Panc1 (cell line): ENCODE measurements at regions of chr16 and their contacts with region 1.

Region 1: DNA sequence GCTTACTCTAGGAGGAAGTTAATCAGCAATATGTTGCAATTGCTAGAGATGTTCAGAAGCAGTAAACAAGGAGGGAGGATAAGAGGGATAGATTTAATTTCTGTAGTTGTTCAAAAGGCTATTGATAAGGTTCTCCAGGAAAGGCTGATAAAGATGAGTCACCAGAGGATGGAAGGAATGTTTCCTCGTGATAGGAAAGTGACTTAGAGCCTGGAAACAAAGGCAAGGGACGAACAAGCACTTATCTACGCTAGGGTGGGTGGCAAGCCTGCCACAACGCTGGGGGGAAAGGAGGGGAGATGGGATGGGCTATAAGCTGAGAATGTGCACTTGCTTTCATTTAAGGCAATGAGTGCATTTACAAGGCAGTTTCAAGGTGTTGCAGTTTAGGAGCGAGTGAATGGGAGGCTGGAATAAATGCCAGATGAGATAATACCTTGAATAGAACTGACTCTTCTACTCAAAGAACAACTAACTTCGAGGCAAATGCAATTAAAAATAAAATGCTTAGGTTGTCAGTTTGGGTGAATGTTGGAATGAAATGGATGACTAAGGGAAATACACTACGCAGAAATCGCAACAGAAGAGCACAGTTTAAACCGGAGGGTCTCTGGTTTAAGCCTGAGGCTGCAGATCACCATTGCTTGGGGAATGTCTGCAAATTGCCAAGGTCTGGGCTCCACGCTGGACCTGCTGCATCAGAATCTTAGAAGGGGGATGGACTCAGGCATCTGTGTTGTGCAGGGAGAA is 76.0 kb upstream of the RBBP6 start:
- DNase-seq: no peak
- ATAC-seq: no peak
- H3K4me3 ChIP-seq: no peak overlapping the region
- H3K27ac ChIP-seq: no peak overlapping the region
- H3K4me1 ChIP-seq: no peaks in the 10 kb centered on the region
- H3K27me3 ChIP-seq: no peaks in the 10 kb centered on the region
- CTCF ChIP-seq: no peak

Region 2: GRCh38 chr16:24318670-24319069 is 144.7 kb before region 1 on chr16:
- CTCF ChIA-PET with region 1: interaction called, 10 read pairs
- POLR2A ChIA-PET with region 1: no interaction called
- in situ Hi-C with region 1: no loop called
- intact Hi-C with region 1: no loop called
- DNase-seq: no peak
- ATAC-seq: no peak
- H3K4me3 ChIP-seq: no peak overlapping the region
- H3K27ac ChIP-seq: no peak overlapping the region
- H3K4me1 ChIP-seq: no peaks in the 10 kb centered on the region
- H3K27me3 ChIP-seq: no peaks in the 10 kb centered on the region
- CTCF ChIP-seq: no peak